Activated CD8-positive, alpha-beta T cell treated with anti-CD3 and anti-CD28 coated beads, Interleukin-2, amount 10 ng/mL, durations not matched to agents 7 days and 5 days (primary cell): ENCODE measurements at regions of chr9 and their contacts with region 1.

Region 1: DNA sequence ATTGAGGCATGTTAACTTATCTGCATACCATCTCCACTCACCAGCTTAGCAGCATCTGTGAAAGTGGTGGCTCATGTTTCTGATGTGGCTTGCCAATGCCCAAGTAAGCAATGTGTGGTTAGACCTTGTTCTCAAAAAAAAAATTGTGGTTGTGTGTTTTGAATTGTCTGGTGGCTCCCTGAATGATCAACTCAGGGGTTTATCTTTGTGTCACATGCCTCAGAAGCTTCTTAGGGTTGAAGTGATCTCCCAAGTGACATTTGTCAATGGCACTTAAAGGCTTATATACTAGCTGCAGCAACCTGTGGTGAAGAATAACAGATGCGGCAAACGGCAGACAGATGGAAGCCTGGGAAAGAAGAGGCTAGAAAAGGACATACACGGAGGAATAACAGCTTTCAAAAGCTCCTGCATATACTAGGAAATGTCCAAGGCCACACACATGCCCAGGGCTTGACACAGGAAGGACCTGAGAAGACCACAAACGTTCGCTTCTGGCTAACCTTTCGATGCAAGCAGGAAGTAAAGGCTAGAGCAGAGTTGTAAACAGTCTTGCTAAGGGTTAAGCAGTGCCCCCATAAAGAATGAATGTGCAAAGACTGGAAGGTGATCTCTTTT is 42.2 kb upstream of the FSD1L start:
- DNase-seq: peak; percentile 83
- ATAC-seq: peak; percentile 93
- H3K4me3 Mint-ChIP-seq: peak overlapping the region; percentile 64
- H3K27ac Mint-ChIP-seq: peak overlapping the region; percentile 86
- H3K4me1 Mint-ChIP-seq: peaks cover 53% of the 10 kb centered on the region
- H3K27me3 Mint-ChIP-seq: peaks cover 48% of the 10 kb centered on the region

Region 2: GRCh38 chr9:104747558-104748358 is 657.9 kb before region 1 on chr9 and contains the start of gene NIPSNAP3A:
- CTCF ChIA-PET with region 1: no interaction called
- POLR2A ChIA-PET with region 1: interaction called, 10 read pairs
- DNase-seq: peak; percentile 91
- ATAC-seq: peak; percentile 95
- H3K4me3 Mint-ChIP-seq: peak within 1 kb of the TSS; percentile 96
- H3K27ac Mint-ChIP-seq: peak within 1 kb of the TSS; percentile 99
- H3K4me1 Mint-ChIP-seq: peaks cover 25% of the 10 kb centered on the region
- H3K27me3 Mint-ChIP-seq: no peaks in the 10 kb centered on the region
- total RNA-seq, gene NIPSNAP3A: 24.1 to 24.6 TPM

Region 3: DNA sequence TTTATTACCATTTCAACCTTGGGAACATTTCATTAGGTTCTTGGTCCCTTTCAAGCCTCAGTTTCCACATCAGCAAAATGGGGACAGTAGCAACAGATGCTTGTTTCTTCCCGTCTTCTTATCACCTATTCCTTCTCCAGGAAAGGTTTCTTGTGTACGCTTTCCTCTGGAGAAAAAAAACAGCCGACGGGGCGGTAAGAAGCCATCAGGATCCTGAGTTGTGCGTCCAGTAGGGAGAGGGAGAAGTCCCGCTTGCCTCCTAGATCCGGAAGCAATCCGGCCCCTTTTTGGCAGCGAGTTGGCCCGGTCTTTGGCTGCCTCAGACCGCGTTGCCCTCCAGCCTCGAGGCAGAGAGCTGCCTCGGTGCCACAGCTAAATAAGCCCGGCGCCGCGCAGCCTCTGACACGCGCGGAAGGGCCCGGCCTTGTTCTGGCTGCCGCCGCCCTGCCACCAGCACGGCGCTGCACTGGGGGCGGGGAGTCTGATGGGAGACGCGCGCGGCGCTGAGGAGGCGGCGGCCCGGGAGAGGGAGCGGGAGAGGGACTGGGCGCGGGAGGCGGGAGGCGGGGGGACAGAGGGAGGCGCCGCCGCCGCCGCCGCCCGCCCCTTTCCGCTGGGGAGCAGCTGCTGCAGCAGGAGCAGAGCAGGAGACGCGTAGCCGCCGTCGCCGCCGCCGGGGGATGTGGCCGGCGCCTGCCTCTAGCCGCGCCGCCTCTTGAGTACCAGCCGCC is 161.5 kb before region 1 on chr9 and contains the start of gene SLC44A1:
- CTCF ChIA-PET with region 1: interaction called, 12 read pairs
- POLR2A ChIA-PET with region 1: interaction called, 15 read pairs
- DNase-seq: peak; percentile 95
- ATAC-seq: peak; percentile 97
- H3K4me3 Mint-ChIP-seq: peak within 1 kb of the TSS; percentile 83
- H3K27ac Mint-ChIP-seq: peak within 1 kb of the TSS; percentile 75
- H3K4me1 Mint-ChIP-seq: peaks cover 25% of the 10 kb centered on the region
- H3K27me3 Mint-ChIP-seq: peaks cover 61% of the 10 kb centered on the region
- total RNA-seq, gene SLC44A1: 14.1 to 14.3 TPM

Region 4: GRCh38 chr9:105332471-105332870 is 73.2 kb before region 1 on chr9:
- CTCF ChIA-PET with region 1: no interaction called
- POLR2A ChIA-PET with region 1: no interaction called
- DNase-seq: no peak
- ATAC-seq: no peak
- H3K4me3 Mint-ChIP-seq: no peak overlapping the region
- H3K27ac Mint-ChIP-seq: no peak overlapping the region
- H3K4me1 Mint-ChIP-seq: peaks cover 3% of the 10 kb centered on the region
- H3K27me3 Mint-ChIP-seq: no peaks in the 10 kb centered on the region

Region 5: DNA sequence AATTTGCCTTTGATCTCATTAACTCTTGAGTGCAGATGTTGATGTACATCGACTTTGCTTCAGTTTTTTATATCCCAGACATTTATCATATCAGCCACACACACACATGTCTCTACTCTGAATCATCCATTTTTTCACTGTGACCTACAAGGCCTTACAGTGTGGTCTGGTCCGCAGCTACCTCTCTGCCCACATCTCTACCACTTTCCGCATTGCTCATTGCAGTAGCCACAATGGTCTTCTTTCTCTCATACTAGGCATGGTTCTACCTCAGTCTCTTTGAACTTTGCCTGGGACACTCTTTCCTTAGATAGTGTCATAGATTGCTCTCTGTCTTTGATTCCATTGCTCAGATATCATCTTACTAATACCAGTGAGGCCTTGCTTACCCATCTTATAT is 45.7 kb before region 1 on chr9:
- CTCF ChIA-PET with region 1: interaction called, 8 read pairs
- POLR2A ChIA-PET with region 1: interaction called, 17 read pairs
- DNase-seq: peak; percentile 72
- ATAC-seq: peak; percentile 82
- H3K4me3 Mint-ChIP-seq: no peak overlapping the region
- H3K27ac Mint-ChIP-seq: no peak overlapping the region
- H3K4me1 Mint-ChIP-seq: peaks cover 35% of the 10 kb centered on the region
- H3K27me3 Mint-ChIP-seq: peaks cover 7% of the 10 kb centered on the region

Region 6: GRCh38 chr9:105385381-105385985 is 20.1 kb before region 1 on chr9:
- CTCF ChIA-PET with region 1: interaction called, 9 read pairs
- POLR2A ChIA-PET with region 1: interaction called, 15 read pairs
- DNase-seq: peak; percentile 64
- ATAC-seq: peak; percentile 99
- H3K4me3 Mint-ChIP-seq: peak overlapping the region; percentile 87
- H3K27ac Mint-ChIP-seq: peak overlapping the region; percentile 93
- H3K4me1 Mint-ChIP-seq: peaks cover 31% of the 10 kb centered on the region
- H3K27me3 Mint-ChIP-seq: peaks cover 2% of the 10 kb centered on the region